A673 (cell line): ENCODE measurements at regions of chr5 and their contacts with region 1.

Region 1: GRCh38 chr5:167458406-167458805 is 833.0 kb upstream of the WWC1 start:
- DNase-seq: no peak
- H3K4me3 ChIP-seq: no peak overlapping the region
- H3K27ac ChIP-seq: no peak overlapping the region
- H3K4me1 ChIP-seq: peaks cover 5% of the 10 kb centered on the region
- H3K27me3 ChIP-seq: no peaks in the 10 kb centered on the region
- CTCF ChIP-seq: no peak

Region 2: GRCh38 chr5:166488511-166488910 is 969.9 kb before region 1 on chr5:
- CTCF ChIA-PET with region 1: no interaction called
- POLR2A ChIA-PET with region 1: no interaction called
- intact Hi-C with region 1: no loop called
- DNase-seq: no peak
- H3K4me3 ChIP-seq: no peak overlapping the region
- H3K27ac ChIP-seq: no peak overlapping the region
- H3K4me1 ChIP-seq: no peaks in the 10 kb centered on the region
- H3K27me3 ChIP-seq: no peaks in the 10 kb centered on the region
- CTCF ChIP-seq: no peak

Region 3: GRCh38 chr5:167950126-167950721 is 491.8 kb after region 1 on chr5:
- CTCF ChIA-PET with region 1: no interaction called
- POLR2A ChIA-PET with region 1: interaction called, 26 read pairs
- intact Hi-C with region 1: no loop called
- DNase-seq: peak; percentile 52
- H3K4me3 ChIP-seq: no peak overlapping the region
- H3K27ac ChIP-seq: no peak overlapping the region
- H3K4me1 ChIP-seq: peaks cover 56% of the 10 kb centered on the region
- H3K27me3 ChIP-seq: no peaks in the 10 kb centered on the region
- CTCF ChIP-seq: no peak